Mammary epithelial cell (primary cell): ENCODE measurements at regions of chr2 and their contacts with region 1.

Region 1: GRCh38 chr2:232327105-232328041 is 51.2 kb upstream of the ALPP start:
- DNase-seq: peak; percentile 31
- H3K4me3 ChIP-seq: no peak overlapping the region
- H3K27ac ChIP-seq: no peak overlapping the region
- H3K4me1 ChIP-seq: peaks cover 24% of the 10 kb centered on the region
- H3K27me3 ChIP-seq: no peaks in the 10 kb centered on the region
- CTCF ChIP-seq: peak; percentile 78 to 81

Region 2: DNA sequence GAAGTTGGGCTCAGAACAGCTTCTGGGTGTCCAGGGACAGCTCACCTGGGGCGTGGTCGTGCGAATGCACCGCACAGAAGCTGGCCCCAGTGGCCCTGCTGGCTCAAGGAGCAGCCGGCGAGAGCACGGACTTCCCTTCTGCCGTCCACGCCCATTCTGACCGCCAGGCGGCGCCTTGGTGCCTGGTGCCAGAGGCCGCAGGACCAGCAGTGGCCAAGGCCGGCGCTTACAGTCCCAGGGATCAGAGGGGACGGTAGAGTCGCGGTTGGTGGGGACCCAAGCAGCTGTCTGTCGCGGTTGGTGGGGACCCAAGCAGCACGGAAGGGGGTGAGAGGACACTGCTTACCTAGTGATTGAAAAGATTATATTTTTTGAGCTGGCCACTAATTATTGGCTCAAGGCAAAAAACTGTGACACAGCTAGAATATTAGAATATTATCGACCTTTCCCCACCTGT is 426.9 kb before region 1 on chr2:
- CTCF ChIA-PET with region 1: no interaction called
- dilution Hi-C with region 1: no loop called
- in situ Hi-C with region 1: loop called (anchors 5 to 10 kb)
- intact Hi-C with region 1: no loop called
- DNase-seq: peak; percentile 36
- H3K4me3 ChIP-seq: no peak overlapping the region
- H3K27ac ChIP-seq: no peak overlapping the region
- H3K4me1 ChIP-seq: no peaks in the 10 kb centered on the region
- H3K27me3 ChIP-seq: no peaks in the 10 kb centered on the region
- CTCF ChIP-seq: peak; percentile 57 to 69

Region 3: DNA sequence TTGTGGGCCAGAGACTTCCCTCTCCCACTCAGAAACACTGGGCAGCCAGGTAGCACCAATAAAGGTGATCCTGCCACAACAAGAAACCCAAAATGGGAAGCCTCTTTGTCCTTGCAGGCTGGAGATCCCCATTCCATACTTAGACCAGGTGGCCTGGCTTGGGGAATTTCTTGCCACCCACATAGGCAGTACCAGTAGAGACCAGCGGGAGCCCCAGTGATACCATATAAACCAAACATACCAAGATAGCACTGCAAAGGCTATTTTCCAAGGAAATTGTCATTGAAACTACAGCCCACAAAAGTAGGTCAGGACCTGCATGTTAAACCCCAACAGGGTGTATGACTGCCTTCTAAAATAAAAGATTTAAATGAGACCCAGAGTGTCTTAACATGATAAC is 194.3 kb before region 1 on chr2:
- CTCF ChIA-PET with region 1: no interaction called
- dilution Hi-C with region 1: no loop called
- in situ Hi-C with region 1: no loop called
- intact Hi-C with region 1: loop called (anchors 2 kb)
- DNase-seq: peak; percentile 22
- H3K4me3 ChIP-seq: no peak overlapping the region
- H3K27ac ChIP-seq: no peak overlapping the region
- H3K4me1 ChIP-seq: no peaks in the 10 kb centered on the region
- H3K27me3 ChIP-seq: no peaks in the 10 kb centered on the region
- CTCF ChIP-seq: peak; percentile 23 to 32

Region 4: DNA sequence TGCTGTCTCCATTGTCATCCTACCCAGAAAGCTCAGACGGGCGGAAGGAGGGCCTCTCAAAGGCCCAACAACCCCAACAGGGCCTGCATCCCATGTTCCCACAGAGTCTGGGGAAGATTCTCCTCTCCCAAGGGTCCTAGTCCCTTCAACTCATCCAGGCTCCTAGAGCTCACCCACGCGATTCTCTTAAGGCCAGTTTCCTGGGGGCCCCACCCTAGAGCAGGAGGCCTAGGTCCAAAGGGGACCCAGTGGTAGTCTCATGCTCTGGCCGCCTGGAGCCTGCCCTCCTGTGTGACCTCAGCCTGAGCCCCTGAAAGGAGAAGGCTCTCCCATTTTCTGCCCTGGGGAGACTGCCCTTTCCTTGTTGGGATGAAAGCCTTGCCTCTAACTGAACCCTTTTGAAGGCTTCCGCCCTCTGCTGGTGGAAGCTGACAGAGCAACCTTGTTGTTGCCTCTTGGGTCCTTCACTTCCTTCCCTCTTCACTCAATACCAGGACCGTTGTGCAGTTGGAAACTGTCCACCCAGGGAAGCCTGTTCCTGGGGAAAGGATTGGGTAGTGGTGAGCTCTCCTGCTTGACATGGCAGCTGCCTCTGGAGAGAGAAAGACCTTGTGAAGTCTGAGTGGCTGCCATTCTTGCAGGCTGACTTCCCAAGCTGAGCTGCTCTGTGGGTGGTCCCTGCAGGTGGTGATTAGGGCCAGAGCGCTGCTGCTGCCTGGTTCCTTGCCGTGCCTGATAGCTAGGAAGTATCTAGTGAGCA is 34.8 kb before region 1 on chr2:
- CTCF ChIA-PET with region 1: no interaction called
- dilution Hi-C with region 1: no loop called
- in situ Hi-C with region 1: no loop called
- intact Hi-C with region 1: loop called (anchors 2 kb)
- DNase-seq: peak; percentile 45
- H3K4me3 ChIP-seq: no peak overlapping the region
- H3K27ac ChIP-seq: no peak overlapping the region
- H3K4me1 ChIP-seq: peaks cover 9% of the 10 kb centered on the region
- H3K27me3 ChIP-seq: no peaks in the 10 kb centered on the region
- CTCF ChIP-seq: peak; percentile 79 to 84

Region 5: GRCh38 chr2:232339121-232340081 is 12.0 kb after region 1 on chr2:
- CTCF ChIA-PET with region 1: no interaction called
- dilution Hi-C with region 1: no loop called
- in situ Hi-C with region 1: no loop called
- intact Hi-C with region 1: no loop called
- DNase-seq: no peak
- H3K4me3 ChIP-seq: no peak overlapping the region
- H3K27ac ChIP-seq: no peak overlapping the region
- H3K4me1 ChIP-seq: no peaks in the 10 kb centered on the region
- H3K27me3 ChIP-seq: no peaks in the 10 kb centered on the region
- CTCF ChIP-seq: no peak

Region 6: DNA sequence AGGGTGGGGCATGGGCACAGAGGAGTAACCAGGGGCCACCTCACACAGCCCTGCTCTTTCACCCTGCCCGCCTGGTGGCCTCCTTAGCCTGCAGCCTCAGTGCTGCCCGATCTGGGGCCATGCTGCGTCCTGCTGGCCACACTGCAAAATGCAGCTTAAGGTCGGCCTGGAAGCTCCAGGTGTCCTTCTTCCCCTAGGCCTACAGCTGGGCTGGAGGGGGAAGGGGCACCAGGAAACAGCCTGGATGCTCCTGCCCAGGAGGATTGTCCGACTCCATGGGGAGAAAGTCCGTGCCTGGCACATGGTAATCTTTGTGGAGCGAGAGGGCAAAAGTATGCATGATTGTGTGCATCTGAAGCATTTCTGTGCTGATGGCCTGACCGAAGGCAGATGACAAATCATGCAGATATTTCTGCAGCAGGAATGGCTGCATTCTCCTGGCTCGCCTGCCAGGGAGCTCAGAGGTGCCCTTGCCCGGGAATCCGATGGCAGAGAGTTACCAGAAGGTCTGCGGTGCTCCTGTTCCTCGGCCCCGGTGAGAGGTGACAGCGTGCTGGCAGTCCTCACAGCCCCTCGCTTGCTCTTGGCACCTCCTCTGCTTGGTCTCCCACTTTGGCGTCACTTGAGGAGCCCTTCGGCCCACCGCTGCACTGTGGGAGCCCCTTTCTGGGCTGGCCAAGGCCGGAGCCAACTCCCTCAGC is 38.4 kb after region 1 on chr2:
- CTCF ChIA-PET with region 1: no interaction called
- dilution Hi-C with region 1: no loop called
- in situ Hi-C with region 1: no loop called
- intact Hi-C with region 1: loop called (anchors 5 kb)
- DNase-seq: peak; percentile 28
- H3K4me3 ChIP-seq: no peak overlapping the region
- H3K27ac ChIP-seq: no peak overlapping the region
- H3K4me1 ChIP-seq: peaks cover 3% of the 10 kb centered on the region
- H3K27me3 ChIP-seq: no peaks in the 10 kb centered on the region
- CTCF ChIP-seq: peak; percentile 29 to 51